GM10248 (cell line): ENCODE measurements at regions of chr3 and their contacts with region 1.

Region 1: DNA sequence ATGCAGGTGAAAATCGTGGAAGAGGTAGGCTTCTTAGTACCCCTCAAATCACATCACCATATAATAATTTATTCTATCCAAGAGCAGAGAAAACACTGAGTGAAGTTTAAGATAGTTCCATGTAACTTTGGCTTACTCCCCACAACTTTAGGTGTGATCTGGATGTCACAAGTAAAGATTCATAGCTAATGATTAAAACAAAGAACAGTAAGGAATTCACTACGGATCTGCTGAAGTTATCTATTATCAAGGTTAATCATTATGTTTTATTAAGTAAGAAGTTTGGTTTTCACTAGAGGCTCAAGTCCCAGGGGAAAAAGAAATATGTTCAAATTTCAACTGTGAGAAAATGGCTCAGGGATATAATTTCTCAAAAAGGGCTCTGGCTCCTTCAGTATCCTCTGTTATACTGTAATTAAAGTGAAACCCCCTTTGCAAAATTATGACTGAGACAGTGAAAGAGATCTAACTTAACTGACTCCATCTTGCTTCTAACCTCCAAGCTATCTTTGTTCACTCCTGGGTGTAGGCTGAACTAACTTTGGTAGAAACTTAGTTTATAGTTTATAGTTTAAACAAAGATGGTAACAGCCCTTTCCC is 17.1 kb downstream of the CD80 start:
- DNase-seq: no peak
- CTCF ChIP-seq: no peak

Region 2: GRCh38 chr3:119380697-119381096 is 161.6 kb before region 1 on chr3:
- CTCF ChIA-PET with region 1: no interaction called
- POLR2A ChIA-PET with region 1: no interaction called
- DNase-seq: no peak
- CTCF ChIP-seq: no peak

Region 3: GRCh38 chr3:119559441-119559963 is 17.2 kb after region 1 on chr3 and contains the start of gene CD80:
- CTCF ChIA-PET with region 1: interaction called, 18 read pairs
- POLR2A ChIA-PET with region 1: interaction called, 5 read pairs
- DNase-seq: peak; percentile 65
- CTCF ChIP-seq: peak; percentile 67

Region 4: DNA sequence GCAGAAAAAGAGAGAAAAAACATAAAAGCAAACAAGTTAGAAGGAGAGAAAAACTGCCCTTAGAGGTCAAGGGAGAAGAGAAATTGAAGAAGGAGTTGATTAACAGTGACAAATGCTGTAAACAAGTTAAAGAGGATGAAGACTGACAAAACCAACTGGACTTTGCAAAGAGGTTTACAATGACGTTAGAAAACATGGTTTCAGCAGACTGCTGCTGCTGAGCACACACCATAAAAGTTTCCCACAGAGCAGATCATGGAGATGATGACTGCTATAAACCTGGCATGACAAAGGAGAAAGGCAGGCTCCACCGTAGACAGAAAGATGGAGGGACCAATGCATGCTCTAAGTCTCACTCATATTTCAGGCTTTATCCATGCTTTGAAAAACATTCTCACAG is 1924.8 kb after region 1 on chr3:
- CTCF ChIA-PET with region 1: no interaction called
- POLR2A ChIA-PET with region 1: no interaction called
- DNase-seq: no peak
- CTCF ChIP-seq: no peak